ENCODE measurements at regions of chr17 and their contacts with region 1.

Region 1: GRCh38 chr17:39980351-39981206 is at the start of gene PSMD3:
- DNase-seq: peak; percentile 100
- H3K4me3 ChIP-seq: peak within 1 kb of the TSS; percentile 75 to 100 (median 96)
- H3K27ac ChIP-seq: peak within 1 kb of the TSS; percentile 96 to 99 (median 96)
- H3K4me1 ChIP-seq: peaks cover 24 to 38% (median 32%) of the 10 kb centered on the region in 4 donors
- H3K27me3 ChIP-seq: peaks cover 0 to 17% (median 0%) of the 10 kb centered on the region in 4 donors
- CTCF ChIP-seq: peak; percentile 71 to 98 (median 84)
- EP300 ChIP-seq: no peak
- POLR2A ChIP-seq: peak; percentile 88
- total RNA-seq, gene PSMD3: 58.1 to 117 (median 84.0) TPM

Region 2: GRCh38 chr17:39927101-39927928 is 53.3 kb before region 1 on chr17 and contains the starts of genes LRRC3C and ORMDL3:
- intact Hi-C with region 1: loop called (anchors 2 kb)
- DNase-seq: peak; percentile 98
- H3K4me3 ChIP-seq: peak within 1 kb of the TSS; percentile 80 to 92 (median 91)
- H3K27ac ChIP-seq: peak within 1 kb of the TSS; percentile 89 to 94 (median 93)
- H3K4me1 ChIP-seq: peaks cover 42 to 56% (median 47%) of the 10 kb centered on the region in 4 donors
- H3K27me3 ChIP-seq: no peaks in the 10 kb centered on the region
- CTCF ChIP-seq: no peak
- EP300 ChIP-seq: no peak
- POLR2A ChIP-seq: peak; percentile 54
- total RNA-seq, gene LRRC3C: not detected
- total RNA-seq, gene ORMDL3: 33.2 to 68.6 (median 45.9) TPM

Region 3: DNA sequence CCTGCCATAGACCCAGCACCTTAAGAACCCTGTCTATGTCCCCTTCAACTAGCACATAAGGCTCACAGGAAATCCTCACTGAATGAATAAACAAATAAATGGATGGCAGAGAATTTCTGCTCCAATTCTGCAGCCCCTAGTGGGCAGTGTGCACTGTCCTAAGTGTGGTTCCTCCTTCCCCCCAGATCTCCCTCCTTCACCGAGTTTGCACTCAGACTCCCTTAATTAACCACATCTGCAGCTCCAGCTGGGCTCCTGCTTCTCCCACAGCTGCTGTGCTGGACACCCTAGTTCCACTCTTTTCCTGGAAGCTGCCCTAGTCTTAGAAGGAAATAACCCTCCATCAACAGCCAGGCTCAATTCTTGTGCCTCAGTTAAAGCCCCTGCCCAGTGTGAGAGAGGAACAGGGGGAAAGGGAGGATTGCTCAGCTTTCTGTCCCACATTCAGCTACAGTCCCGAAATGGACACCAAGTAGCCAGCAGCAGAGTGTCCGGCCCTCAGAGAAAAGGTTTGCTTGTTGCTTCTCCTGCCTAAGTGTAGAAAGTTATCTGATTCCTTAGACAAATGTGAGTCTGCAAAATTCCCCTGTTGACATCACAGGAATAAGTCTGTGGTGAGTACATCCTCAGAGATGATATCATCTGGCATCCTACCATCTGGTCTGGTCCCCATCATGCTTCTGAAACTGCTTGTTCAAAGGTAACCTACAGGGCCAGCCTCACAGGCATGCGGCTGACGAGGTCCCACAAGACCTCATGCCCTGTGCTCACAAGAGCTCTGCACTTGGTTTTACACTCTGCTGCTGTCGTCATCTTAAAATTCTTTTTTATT is 40.8 kb before region 1 on chr17:
- intact Hi-C with region 1: no loop called
- DNase-seq: no peak
- H3K4me3 ChIP-seq: no peak overlapping the region
- H3K27ac ChIP-seq: no peak overlapping the region
- H3K4me1 ChIP-seq: peaks cover 0 to 9% (median 2%) of the 10 kb centered on the region in 4 donors
- H3K27me3 ChIP-seq: peaks cover 0 to 20% (median 0%) of the 10 kb centered on the region in 4 donors
- CTCF ChIP-seq: peak in 1 of 3 experiments; percentile 8
- EP300 ChIP-seq: no peak
- POLR2A ChIP-seq: no peak

Region 4: DNA sequence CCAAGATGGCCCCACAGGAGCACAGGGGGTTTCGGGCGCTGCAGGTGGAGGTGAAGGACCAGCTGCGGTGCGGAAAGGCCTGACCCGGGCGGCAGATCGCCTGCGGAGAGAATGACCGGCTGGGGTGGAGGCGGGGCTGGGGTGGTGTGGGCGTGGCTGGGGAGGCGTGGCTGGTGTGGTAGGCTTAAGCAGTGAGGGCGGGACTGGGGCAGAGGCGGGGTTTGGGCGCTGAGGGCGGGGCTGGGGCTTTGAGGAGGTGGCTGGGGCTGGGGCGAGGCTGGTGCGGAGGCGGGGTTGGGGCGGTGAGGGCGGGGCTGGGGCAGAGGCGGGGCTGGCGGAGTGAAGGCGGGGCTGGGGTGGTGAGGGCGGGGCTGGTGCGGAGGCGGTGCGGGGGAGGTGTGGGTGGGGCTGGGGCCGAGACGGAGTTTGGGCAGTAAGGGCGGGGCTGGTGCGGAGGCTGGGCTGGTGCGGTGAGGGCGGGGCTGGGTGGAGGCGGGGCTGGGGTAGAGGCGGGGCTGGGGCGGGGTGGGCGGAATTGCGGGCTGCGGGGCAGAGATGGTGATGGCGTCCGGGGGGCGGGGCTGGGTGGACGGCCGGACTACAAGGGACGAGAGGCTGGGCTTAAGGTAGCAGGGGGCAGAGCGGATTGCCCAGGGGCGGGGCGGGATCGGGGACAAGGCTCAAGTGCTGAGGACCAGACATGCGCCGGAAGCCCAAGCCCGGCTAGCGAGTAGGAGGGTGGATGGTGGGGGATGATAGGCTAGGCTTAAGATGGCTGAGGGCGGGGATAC is 27.7 kb before region 1 on chr17:
- intact Hi-C with region 1: loop called (anchors 2 kb)
- DNase-seq: peak; percentile 100
- H3K4me3 ChIP-seq: peak overlapping the region; percentile 47 to 57 (median 49)
- H3K27ac ChIP-seq: peak overlapping the region; percentile 60 to 78 (median 66)
- H3K4me1 ChIP-seq: peaks cover 14 to 16% (median 15%) of the 10 kb centered on the region in 4 donors
- H3K27me3 ChIP-seq: no peaks in the 10 kb centered on the region
- CTCF ChIP-seq: no peak
- EP300 ChIP-seq: no peak
- POLR2A ChIP-seq: no peak

Measured in esophagus muscularis mucosa (tissue), 4 donors.